Psoas muscle (tissue), 8 donors: ENCODE measurements at regions of chr6 and their contacts with region 1.

Region 1: GRCh38 chr6:68634726-68635411 is at the start of gene ADGRB3:
- DNase-seq: peak; percentile 79 to 87
- ATAC-seq: peak; percentile 67 to 95 (median 90)
- H3K4me3 ChIP-seq: peak within 1 kb of the TSS; percentile 72
- H3K27ac ChIP-seq: peak within 1 kb of the TSS; percentile 30
- H3K4me1 ChIP-seq: no peaks in the 10 kb centered on the region
- H3K27me3 ChIP-seq: peaks cover 0 to 36% (median 0%) of the 10 kb centered on the region in 3 donors
- CTCF ChIP-seq: no peak
- total RNA-seq, gene ADGRB3: 0.20 to 0.39 (median 0.27) TPM

Region 2: GRCh38 chr6:68778356-68779020 is 143.6 kb after region 1 on chr6:
- intact Hi-C with region 1: loop called in 1 of 2 experiments (anchors 2 kb)
- DNase-seq: no peak
- ATAC-seq: peak in 1 of 4 donors; percentile 61
- H3K4me3 ChIP-seq: no peak overlapping the region
- H3K27ac ChIP-seq: no peak overlapping the region
- H3K4me1 ChIP-seq: no peaks in the 10 kb centered on the region
- H3K27me3 ChIP-seq: no peaks in the 10 kb centered on the region
- CTCF ChIP-seq: peak; percentile 54

Region 3: GRCh38 chr6:68958327-68958726 is 323.5 kb after region 1 on chr6:
- intact Hi-C with region 1: loop called in 1 of 2 experiments (anchors 5 kb)
- DNase-seq: no peak
- ATAC-seq: no peak
- H3K4me3 ChIP-seq: no peak overlapping the region
- H3K27ac ChIP-seq: no peak overlapping the region
- H3K4me1 ChIP-seq: no peaks in the 10 kb centered on the region
- H3K27me3 ChIP-seq: no peaks in the 10 kb centered on the region
- CTCF ChIP-seq: no peak

Region 4: DNA sequence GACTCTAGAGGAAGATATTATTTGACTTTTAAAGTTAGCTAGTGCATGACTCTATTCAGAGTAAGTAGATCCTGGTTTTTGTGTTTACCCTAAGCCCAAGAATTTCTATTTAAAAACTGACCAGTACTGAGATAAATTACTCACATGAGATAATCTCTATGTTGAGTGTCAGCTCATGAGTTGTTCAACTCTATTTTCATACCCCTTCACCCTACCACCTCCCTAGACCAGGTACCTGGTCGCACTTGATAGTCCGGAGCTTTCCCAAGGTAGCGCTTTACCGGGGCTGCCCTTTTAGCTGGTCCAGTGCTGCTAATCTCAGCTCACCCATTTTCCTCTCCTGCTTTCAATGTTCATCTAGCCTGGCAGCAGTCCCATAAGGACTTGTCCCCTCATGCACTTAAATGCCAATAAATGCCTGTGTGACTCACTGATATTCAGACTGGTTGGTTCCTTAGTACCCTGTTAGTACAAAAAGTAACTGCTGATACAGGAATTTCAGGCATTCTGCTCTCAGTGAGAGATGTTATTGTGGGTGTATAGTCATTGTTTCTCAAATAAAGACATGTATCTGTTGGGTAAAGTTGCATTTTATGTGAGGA is 504.1 kb after region 1 on chr6:
- intact Hi-C with region 1: no loop called
- DNase-seq: no peak
- ATAC-seq: no peak
- H3K4me3 ChIP-seq: no peak overlapping the region
- H3K27ac ChIP-seq: no peak overlapping the region
- H3K4me1 ChIP-seq: no peaks in the 10 kb centered on the region
- H3K27me3 ChIP-seq: peaks cover 0 to 3% (median 0%) of the 10 kb centered on the region in 3 donors
- CTCF ChIP-seq: no peak